GM12878 (cell line): ENCODE measurements at regions of chr16 and their contacts with region 1.

Region 1: GRCh38 chr16:47523342-47524006 is 62.3 kb downstream of the PHKB start:
- DNase-seq: peak; percentile 78
- ATAC-seq: peak; percentile 100
- H3K4me3 ChIP-seq: no peak overlapping the region
- H3K27ac ChIP-seq: peak overlapping the region; percentile 26
- H3K4me1 ChIP-seq: peaks cover 6% of the 10 kb centered on the region; the same call in 1 of the 2 replicates
- H3K27me3 ChIP-seq: no peaks in the 10 kb centered on the region
- CTCF ChIP-seq: no peak
- EP300 ChIP-seq: peak in 1 of 2 experiments; percentile 79; a peak in 1 of 4 replicates
- POLR2A ChIP-seq: no peak
- RAD21 ChIP-seq: 0 out of 2 replicates have a peak, but pooled peaks have one; percentile 13

Region 2: DNA sequence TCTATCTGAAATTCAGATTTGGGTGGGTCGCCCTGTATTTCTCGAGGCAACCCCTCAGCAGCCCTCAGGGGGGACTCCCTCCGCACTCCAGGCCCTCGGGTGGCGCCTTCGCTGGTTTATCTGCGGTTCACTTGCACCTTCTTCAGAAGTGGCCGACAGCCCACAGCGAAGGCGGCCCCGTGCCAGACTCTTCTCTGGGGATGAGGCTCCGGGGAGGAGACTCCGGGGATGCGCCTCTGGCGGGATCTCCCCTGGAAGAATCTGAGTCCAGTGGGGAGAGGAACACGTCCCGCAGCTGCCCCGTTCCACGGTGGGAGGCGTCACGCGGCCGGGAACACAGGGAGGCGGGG is 486.1 kb before region 1 on chr16:
- CTCF ChIA-PET with region 1: no interaction called
- POLR2A ChIA-PET with region 1: no interaction called
- RAD21 ChIA-PET with region 1: no interaction called
- SMC1A ChIA-PET with region 1: no interaction called
- in situ Hi-C with region 1: no loop called
- intact Hi-C with region 1: no loop called
- DNase-seq: no peak
- ATAC-seq: peak; percentile 58
- H3K4me3 ChIP-seq: peak overlapping the region; percentile 75
- H3K27ac ChIP-seq: no peak overlapping the region
- H3K4me1 ChIP-seq: peaks cover 16% of the 10 kb centered on the region
- H3K27me3 ChIP-seq: no peaks in the 10 kb centered on the region
- CTCF ChIP-seq: no peak
- EP300 ChIP-seq: no peak
- POLR2A ChIP-seq: no peak
- RAD21 ChIP-seq: no peak

Region 3: GRCh38 chr16:47481698-47482374 is 41.6 kb before region 1 on chr16:
- CTCF ChIA-PET with region 1: interaction called, 3 read pairs
- POLR2A ChIA-PET with region 1: interaction called, 3 read pairs
- RAD21 ChIA-PET with region 1: interaction called, 10 read pairs
- SMC1A ChIA-PET with region 1: interaction called, 8 read pairs
- in situ Hi-C with region 1: no loop called
- intact Hi-C with region 1: no loop called
- DNase-seq: no peak
- ATAC-seq: peak; percentile 27
- H3K4me3 ChIP-seq: no peak overlapping the region
- H3K27ac ChIP-seq: no peak overlapping the region; the same call in 1 of the 2 replicates
- H3K4me1 ChIP-seq: peaks cover 23% of the 10 kb centered on the region
- H3K27me3 ChIP-seq: no peaks in the 10 kb centered on the region
- CTCF ChIP-seq: no peak
- EP300 ChIP-seq: no peak
- POLR2A ChIP-seq: no peak
- RAD21 ChIP-seq: no peak

Region 4: GRCh38 chr16:47503936-47504335 is 19.5 kb before region 1 on chr16:
- CTCF ChIA-PET with region 1: interaction called, 3 read pairs
- POLR2A ChIA-PET with region 1: no interaction called
- RAD21 ChIA-PET with region 1: interaction called, 4 read pairs
- SMC1A ChIA-PET with region 1: interaction called, 14 read pairs
- in situ Hi-C with region 1: no loop called
- intact Hi-C with region 1: no loop called
- DNase-seq: no peak
- ATAC-seq: no peak
- H3K4me3 ChIP-seq: no peak overlapping the region
- H3K27ac ChIP-seq: no peak overlapping the region
- H3K4me1 ChIP-seq: no peaks in the 10 kb centered on the region
- H3K27me3 ChIP-seq: no peaks in the 10 kb centered on the region
- CTCF ChIP-seq: no peak
- EP300 ChIP-seq: no peak
- POLR2A ChIP-seq: no peak
- RAD21 ChIP-seq: no peak

Region 5: GRCh38 chr16:47574091-47575054 is 50.9 kb after region 1 on chr16:
- CTCF ChIA-PET with region 1: no interaction called
- POLR2A ChIA-PET with region 1: interaction called, 3 read pairs
- RAD21 ChIA-PET with region 1: interaction called, 8 read pairs
- SMC1A ChIA-PET with region 1: interaction called, 5 read pairs
- in situ Hi-C with region 1: no loop called
- intact Hi-C with region 1: loop called (anchors 5 kb)
- DNase-seq: peak; percentile 39
- ATAC-seq: peak; percentile 84
- H3K4me3 ChIP-seq: no peak overlapping the region
- H3K27ac ChIP-seq: peak overlapping the region; percentile 15
- H3K4me1 ChIP-seq: peaks cover 9% of the 10 kb centered on the region
- H3K27me3 ChIP-seq: no peaks in the 10 kb centered on the region
- CTCF ChIP-seq: no peak
- EP300 ChIP-seq: no peak
- POLR2A ChIP-seq: no peak
- RAD21 ChIP-seq: no peak

Region 6: DNA sequence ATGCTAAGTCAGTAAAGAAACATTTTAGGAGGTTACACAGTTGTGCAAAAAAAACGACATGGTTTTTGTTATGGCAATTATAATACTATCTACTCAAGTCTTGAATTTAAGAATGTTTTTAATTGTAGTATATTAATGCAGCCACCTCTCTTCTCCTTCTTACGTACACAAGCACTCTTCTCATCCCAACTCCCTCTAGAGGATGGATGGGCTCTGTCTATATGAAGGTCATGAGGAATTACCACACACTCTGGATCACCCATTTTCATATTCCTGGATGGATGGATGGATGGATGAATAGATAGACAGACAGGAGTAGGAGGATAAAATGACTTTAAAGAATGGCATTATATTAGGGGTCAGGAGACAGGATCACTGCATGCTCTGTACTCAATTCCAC is 57.6 kb after region 1 on chr16:
- CTCF ChIA-PET with region 1: interaction called, 6 read pairs
- POLR2A ChIA-PET with region 1: no interaction called
- RAD21 ChIA-PET with region 1: interaction called, 4 read pairs
- SMC1A ChIA-PET with region 1: interaction called, 11 read pairs
- in situ Hi-C with region 1: no loop called
- intact Hi-C with region 1: no loop called
- DNase-seq: no peak
- ATAC-seq: no peak
- H3K4me3 ChIP-seq: no peak overlapping the region
- H3K27ac ChIP-seq: no peak overlapping the region
- H3K4me1 ChIP-seq: no peaks in the 10 kb centered on the region
- H3K27me3 ChIP-seq: no peaks in the 10 kb centered on the region
- CTCF ChIP-seq: no peak
- EP300 ChIP-seq: no peak
- POLR2A ChIP-seq: no peak
- RAD21 ChIP-seq: no peak

Region 7: GRCh38 chr16:47705266-47705665 is 181.8 kb after region 1 on chr16:
- CTCF ChIA-PET with region 1: no interaction called
- POLR2A ChIA-PET with region 1: no interaction called
- RAD21 ChIA-PET with region 1: no interaction called
- SMC1A ChIA-PET with region 1: no interaction called
- in situ Hi-C with region 1: no loop called
- intact Hi-C with region 1: no loop called
- DNase-seq: no peak
- ATAC-seq: no peak
- H3K4me3 ChIP-seq: no peak overlapping the region
- H3K27ac ChIP-seq: no peak overlapping the region
- H3K4me1 ChIP-seq: no peaks in the 10 kb centered on the region
- H3K27me3 ChIP-seq: no peaks in the 10 kb centered on the region
- CTCF ChIP-seq: no peak
- EP300 ChIP-seq: no peak
- POLR2A ChIP-seq: no peak
- RAD21 ChIP-seq: no peak